Panc1 (cell line): ENCODE measurements at regions of chr12 and their contacts with region 1.

Region 1: DNA sequence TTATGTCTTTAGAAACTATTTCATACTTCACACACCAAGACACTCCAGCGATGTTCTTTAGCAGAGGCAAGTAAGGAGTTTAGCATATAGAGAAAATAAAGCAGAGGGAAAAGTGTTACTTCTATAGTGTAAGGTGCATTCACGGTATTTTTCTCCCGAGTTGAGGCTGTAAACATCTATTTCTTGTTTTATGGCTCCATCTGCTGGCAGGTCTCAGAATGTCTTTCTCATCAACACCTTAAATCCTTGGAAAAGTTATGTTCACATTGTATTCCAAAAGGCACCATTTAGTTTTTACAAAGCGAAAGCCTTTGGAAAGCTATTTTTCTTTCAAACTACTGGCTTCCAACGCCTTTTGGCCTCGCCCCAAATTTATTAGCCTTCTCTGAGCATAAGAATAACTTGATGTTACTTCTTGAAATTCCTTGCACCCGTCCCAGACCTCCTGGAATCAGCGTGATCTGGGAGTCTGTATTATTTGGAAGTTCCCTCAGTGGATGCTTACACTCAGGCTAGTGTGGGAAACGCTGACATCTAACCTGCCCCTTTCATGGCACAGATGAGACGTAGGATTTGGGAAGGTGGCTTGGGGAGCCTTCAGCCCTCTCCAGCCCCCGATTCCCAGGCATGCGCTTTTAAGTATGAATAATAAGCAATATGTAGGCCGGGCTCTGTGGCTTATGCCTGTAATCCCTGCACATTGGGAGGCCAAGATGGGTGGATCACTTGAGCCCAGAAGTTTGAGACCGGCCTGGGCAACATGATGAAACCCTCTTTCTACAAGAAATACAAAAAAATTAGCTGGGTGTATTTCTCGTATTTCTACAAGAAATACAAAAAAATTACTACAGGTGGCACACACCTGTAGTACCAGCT is 1.9 kb upstream of the PIWIL1 start:
- DNase-seq: peak; percentile 17
- ATAC-seq: peak; percentile 78
- H3K4me3 ChIP-seq: no peak overlapping the region
- H3K27ac ChIP-seq: no peak overlapping the region
- H3K4me1 ChIP-seq: no peaks in the 10 kb centered on the region; the same call in 1 of the 2 replicates
- H3K27me3 ChIP-seq: no peaks in the 10 kb centered on the region; the same call in 1 of the 2 replicates
- CTCF ChIP-seq: peak; percentile 67

Region 2: DNA sequence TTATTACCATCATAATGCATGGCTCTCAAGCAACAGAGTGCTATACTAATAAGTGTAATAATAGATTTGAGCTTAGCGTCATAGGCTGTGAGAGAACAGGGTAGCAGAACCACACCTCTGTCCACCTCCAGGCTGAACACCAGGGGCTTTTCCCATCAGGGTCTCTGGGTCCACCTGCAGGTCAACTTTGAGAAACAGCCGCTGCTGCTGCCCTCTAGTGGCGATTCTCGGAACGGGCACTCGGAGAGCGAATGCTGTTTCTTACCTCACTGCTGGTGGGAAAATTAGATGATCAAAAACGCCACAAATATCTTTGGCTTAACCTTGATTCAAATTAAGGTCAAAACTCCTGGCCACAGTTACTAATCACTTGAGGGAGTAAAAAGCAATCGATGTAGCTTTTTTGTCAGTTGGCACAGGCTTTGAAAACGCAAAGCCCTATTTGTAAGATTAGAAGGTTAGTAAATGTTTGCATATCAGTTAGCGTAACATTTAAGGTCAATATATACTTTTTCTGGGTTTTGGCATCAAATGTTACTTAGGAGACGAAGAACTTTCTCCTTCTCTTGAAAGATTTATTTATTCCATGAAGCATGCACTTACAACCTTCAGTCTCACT is 304.1 kb before region 1 on chr12:
- CTCF ChIA-PET with region 1: interaction called, 6 read pairs
- POLR2A ChIA-PET with region 1: no interaction called
- in situ Hi-C with region 1: no loop called
- intact Hi-C with region 1: loop called (anchors 5 kb)
- DNase-seq: peak; percentile 30
- ATAC-seq: peak; percentile 78
- H3K4me3 ChIP-seq: no peak overlapping the region
- H3K27ac ChIP-seq: no peak overlapping the region
- H3K4me1 ChIP-seq: no peaks in the 10 kb centered on the region
- H3K27me3 ChIP-seq: peaks cover 13% of the 10 kb centered on the region
- CTCF ChIP-seq: peak; percentile 97

Region 3: GRCh38 chr12:130053651-130054069 is 282.1 kb before region 1 on chr12:
- CTCF ChIA-PET with region 1: no interaction called
- POLR2A ChIA-PET with region 1: no interaction called
- in situ Hi-C with region 1: no loop called
- intact Hi-C with region 1: loop called (anchors 1 kb)
- DNase-seq: no peak
- ATAC-seq: peak; percentile 69; the same call in 1 of the 2 replicates
- H3K4me3 ChIP-seq: no peak overlapping the region
- H3K27ac ChIP-seq: no peak overlapping the region
- H3K4me1 ChIP-seq: no peaks in the 10 kb centered on the region
- H3K27me3 ChIP-seq: no peaks in the 10 kb centered on the region; the same call in 1 of the 2 replicates
- CTCF ChIP-seq: no peak